Psoas muscle (tissue), 8 donors: ENCODE measurements at regions of chr3 and their contacts with region 1.

Region 1: GRCh38 chr3:100105541-100105940 is 8.8 kb downstream of the FILIP1L start:
- DNase-seq: no peak
- ATAC-seq: peak in 3 of 4 donors; percentile 48 to 50 (median 48)
- H3K4me3 ChIP-seq: peak overlapping the region; percentile 71
- H3K27ac ChIP-seq: peak overlapping the region; percentile 90
- H3K4me1 ChIP-seq: peaks cover 65% of the 10 kb centered on the region
- H3K27me3 ChIP-seq: no peaks in the 10 kb centered on the region
- CTCF ChIP-seq: no peak

Region 2: GRCh38 chr3:99925584-99926212 is 179.8 kb before region 1 on chr3:
- intact Hi-C with region 1: no loop called
- DNase-seq: no peak
- ATAC-seq: peak in 3 of 4 donors; percentile 34 to 43 (median 37)
- H3K4me3 ChIP-seq: no peak overlapping the region
- H3K27ac ChIP-seq: peak overlapping the region; percentile 61
- H3K4me1 ChIP-seq: peaks cover 51% of the 10 kb centered on the region
- H3K27me3 ChIP-seq: no peaks in the 10 kb centered on the region
- CTCF ChIP-seq: no peak

Region 3: DNA sequence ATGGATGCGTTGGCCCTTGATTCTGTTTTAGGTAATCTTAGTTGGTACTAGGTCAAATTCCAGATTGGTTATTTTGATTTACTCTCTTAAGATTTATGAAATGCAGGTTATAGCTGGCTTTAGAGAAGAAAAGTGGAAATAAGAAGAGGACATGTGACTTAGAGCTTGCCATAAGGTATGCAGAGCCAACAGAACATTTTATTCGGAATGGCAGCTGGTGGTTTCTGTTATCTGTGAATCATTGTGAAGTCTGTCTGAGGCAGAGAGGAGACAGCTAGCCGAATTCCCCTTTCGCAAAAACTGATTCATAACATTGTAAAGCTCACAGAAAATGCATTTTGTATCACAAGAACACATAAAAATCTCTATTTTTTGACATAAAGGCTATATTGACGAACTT is 73.3 kb before region 1 on chr3:
- intact Hi-C with region 1: loop called in 1 of 2 experiments (anchors 5 kb)
- DNase-seq: no peak
- ATAC-seq: peak in 3 of 4 donors; percentile 45 to 74 (median 67)
- H3K4me3 ChIP-seq: no peak overlapping the region
- H3K27ac ChIP-seq: peak overlapping the region; percentile 81
- H3K4me1 ChIP-seq: peaks cover 66% of the 10 kb centered on the region
- H3K27me3 ChIP-seq: no peaks in the 10 kb centered on the region
- CTCF ChIP-seq: no peak